Mucosa of descending colon (tissue), 3 donors: ENCODE measurements at regions of chrX and their contacts with region 1.

Region 1: GRCh38 chrX:68842781-68843581 is 14.2 kb downstream of the EFNB1 start:
- DNase-seq: peak; percentile 52 to 69 (median 67)
- ATAC-seq: peak; percentile 60
- H3K4me3 ChIP-seq: no peak overlapping the region
- H3K4me1 ChIP-seq: peaks cover 5% of the 10 kb centered on the region
- CTCF ChIP-seq: no peak

Region 2: GRCh38 chrX:68989865-68990606 is 147.1 kb after region 1 on chrX:
- intact Hi-C with region 1: loop called in 1 of 2 experiments (anchors 10 kb)
- DNase-seq: no peak
- ATAC-seq: peak; percentile 22
- H3K4me3 ChIP-seq: no peak overlapping the region
- H3K4me1 ChIP-seq: peaks cover under 1% of the 10 kb centered on the region
- CTCF ChIP-seq: no peak

Region 3: GRCh38 chrX:69179380-69179911 is 336.5 kb after region 1 on chrX:
- intact Hi-C with region 1: no loop called
- DNase-seq: no peak
- ATAC-seq: peak; percentile 11
- H3K4me3 ChIP-seq: no peak overlapping the region
- H3K4me1 ChIP-seq: no peaks in the 10 kb centered on the region
- CTCF ChIP-seq: no peak